ENCODE measurements at regions of chr7 and their contacts with region 1.

Region 1: DNA sequence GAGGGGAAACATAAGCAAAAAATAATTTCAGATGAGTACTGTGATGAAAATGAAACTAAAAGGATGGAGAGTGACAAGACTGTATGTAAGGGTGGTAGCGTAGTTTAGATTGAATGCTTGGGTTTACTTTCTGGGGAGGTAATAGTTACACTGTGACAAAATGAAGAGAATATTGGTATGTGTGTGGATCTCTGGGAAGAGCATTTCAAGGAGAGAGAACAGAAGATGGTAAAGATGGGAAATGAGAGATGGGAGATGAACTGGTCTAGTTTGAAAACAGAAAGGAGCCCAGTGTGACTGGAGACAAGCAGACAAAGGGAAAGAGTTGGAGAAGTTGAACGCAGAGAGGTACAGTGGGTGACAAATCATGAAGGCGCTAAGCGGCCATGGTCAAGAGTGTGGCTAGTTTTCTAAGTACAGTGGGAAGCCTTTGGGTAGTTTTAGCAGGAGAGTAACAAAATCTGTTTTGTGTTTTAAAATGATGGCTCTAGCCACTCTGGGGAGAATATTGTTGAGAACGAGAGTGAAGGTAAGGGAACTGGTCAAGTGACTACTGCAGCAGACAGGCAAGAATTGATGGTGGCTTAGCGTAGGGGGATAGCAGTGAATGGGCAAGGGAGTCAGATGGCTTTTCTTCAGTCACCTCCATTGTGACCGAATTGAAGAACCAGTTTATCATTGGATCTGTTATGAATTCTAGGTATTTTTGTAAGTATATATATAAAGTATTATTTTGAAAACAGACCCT is 22.6 kb downstream of the PALS2 start:
- DNase-seq: peak in 2 of 9 experiments; percentile 10 to 18
- ATAC-seq: peak; percentile 56
- H3K4me3 ChIP-seq: peak overlapping the region; percentile 26 to 37
- H3K4me3 Mint-ChIP-seq: no peak overlapping the region
- H3K27ac ChIP-seq: no peak overlapping the region
- H3K27ac Mint-ChIP-seq: no peak overlapping the region
- H3K4me1 ChIP-seq: peaks cover 11% of the 10 kb centered on the region
- H3K4me1 Mint-ChIP-seq: peaks cover 10% of the 10 kb centered on the region
- H3K27me3 ChIP-seq: no peaks in the 10 kb centered on the region
- H3K27me3 Mint-ChIP-seq: no peaks in the 10 kb centered on the region
- CTCF ChIP-seq: no peak

Region 2: DNA sequence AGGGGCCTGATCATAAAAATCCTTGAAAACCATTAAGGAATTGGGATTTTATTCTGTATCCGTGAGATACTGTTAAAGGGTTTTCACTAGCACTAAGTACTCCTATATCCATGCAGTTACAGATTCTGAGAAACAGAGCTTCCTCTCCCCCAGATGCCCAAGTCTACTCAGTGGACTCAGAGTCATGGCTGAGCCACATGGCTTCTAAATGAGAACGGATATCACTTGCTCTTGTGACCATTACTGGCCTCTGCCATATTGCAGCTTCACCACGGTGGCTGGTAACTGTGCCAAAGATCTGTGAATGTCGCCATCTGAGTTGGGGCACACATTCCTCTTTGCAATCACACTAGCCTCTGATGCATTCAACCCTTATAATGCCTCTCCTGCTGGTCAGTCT is 64.6 kb before region 1 on chr7:
- CTCF ChIA-PET with region 1: no interaction called
- POLR2A ChIA-PET with region 1: no interaction called
- intact Hi-C with region 1: no loop called
- DNase-seq: no peak
- ATAC-seq: no peak
- H3K4me3 ChIP-seq: no peak overlapping the region
- H3K4me3 Mint-ChIP-seq: no peak overlapping the region
- H3K27ac ChIP-seq: no peak overlapping the region
- H3K27ac Mint-ChIP-seq: no peak overlapping the region
- H3K4me1 ChIP-seq: no peaks in the 10 kb centered on the region
- H3K4me1 Mint-ChIP-seq: no peaks in the 10 kb centered on the region
- H3K27me3 ChIP-seq: no peaks in the 10 kb centered on the region
- H3K27me3 Mint-ChIP-seq: no peaks in the 10 kb centered on the region
- CTCF ChIP-seq: no peak

Region 3: GRCh38 chr7:24637706-24638105 is 41.9 kb after region 1 on chr7:
- CTCF ChIA-PET with region 1: no interaction called
- POLR2A ChIA-PET with region 1: no interaction called
- intact Hi-C with region 1: no loop called
- DNase-seq: no peak
- ATAC-seq: no peak
- H3K4me3 ChIP-seq: no peak overlapping the region
- H3K4me3 Mint-ChIP-seq: no peak overlapping the region
- H3K27ac ChIP-seq: no peak overlapping the region
- H3K27ac Mint-ChIP-seq: no peak overlapping the region
- H3K4me1 ChIP-seq: no peaks in the 10 kb centered on the region
- H3K4me1 Mint-ChIP-seq: peaks cover 3% of the 10 kb centered on the region
- H3K27me3 ChIP-seq: no peaks in the 10 kb centered on the region
- H3K27me3 Mint-ChIP-seq: no peaks in the 10 kb centered on the region
- CTCF ChIP-seq: no peak

Region 4: GRCh38 chr7:25109276-25109675 is 513.4 kb after region 1 on chr7:
- CTCF ChIA-PET with region 1: no interaction called
- POLR2A ChIA-PET with region 1: no interaction called
- intact Hi-C with region 1: loop called in 1 of 2 experiments (anchors 10 kb)
- DNase-seq: no peak
- ATAC-seq: no peak
- H3K4me3 ChIP-seq: no peak overlapping the region
- H3K4me3 Mint-ChIP-seq: no peak overlapping the region
- H3K27ac ChIP-seq: no peak overlapping the region
- H3K27ac Mint-ChIP-seq: no peak overlapping the region
- H3K4me1 ChIP-seq: no peaks in the 10 kb centered on the region
- H3K4me1 Mint-ChIP-seq: no peaks in the 10 kb centered on the region
- H3K27me3 ChIP-seq: no peaks in the 10 kb centered on the region
- H3K27me3 Mint-ChIP-seq: no peaks in the 10 kb centered on the region
- CTCF ChIP-seq: no peak

Measured in CD8-positive, alpha-beta T cell (primary cell).